ENCODE measurements at regions of chr14 and their contacts with region 1.

Region 1: GRCh38 chr14:94136575-94137331 is 7.3 kb upstream of the IFI27L2 start:
- DNase-seq: peak; percentile 59 to 84 (median 73)
- ATAC-seq: peak; percentile 96
- H3K4me3 ChIP-seq: no peak overlapping the region
- H3K4me3 Mint-ChIP-seq: no peak overlapping the region
- H3K27ac ChIP-seq: no peak overlapping the region
- H3K27ac Mint-ChIP-seq: no peak overlapping the region
- H3K4me1 ChIP-seq: no peaks in the 10 kb centered on the region
- H3K4me1 Mint-ChIP-seq: peaks cover 0 to 12% (median 0%) of the 10 kb centered on the region in 7 donors
- H3K27me3 ChIP-seq: no peaks in the 10 kb centered on the region
- H3K27me3 Mint-ChIP-seq: peaks cover 0 to 34% (median 4%) of the 10 kb centered on the region in 5 donors

Region 2: DNA sequence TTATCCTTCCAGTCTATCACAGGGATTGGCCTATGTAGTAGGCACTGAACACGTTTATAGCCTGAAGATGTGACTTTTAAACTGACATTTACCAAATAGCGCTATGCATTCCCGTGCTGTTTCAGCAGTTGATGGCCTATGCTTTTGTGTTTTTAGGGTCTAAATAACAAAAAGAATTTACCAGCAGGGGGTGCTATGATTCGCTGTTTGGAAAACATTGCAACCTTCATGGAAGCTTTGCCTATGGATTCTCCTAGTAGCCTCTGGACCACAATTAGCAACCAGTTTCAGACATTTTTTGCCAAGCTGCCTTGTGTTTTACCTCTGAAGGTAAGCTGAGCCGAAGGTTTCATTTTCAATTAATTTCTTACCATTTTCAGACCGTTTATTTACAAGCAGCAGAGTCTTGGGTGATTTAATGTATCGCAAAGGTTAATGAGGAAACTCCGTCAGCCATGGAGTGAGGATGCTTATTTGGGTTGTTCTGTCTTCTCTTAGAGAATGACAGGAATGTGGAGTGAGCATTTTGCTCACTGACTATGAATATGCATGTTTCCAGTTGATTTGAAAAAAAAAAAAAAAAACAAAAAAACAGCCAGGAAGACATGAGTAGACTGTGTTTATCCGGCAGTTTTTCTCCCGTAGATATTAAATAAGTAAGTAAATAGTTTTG is 481.5 kb before region 1 on chr14:
- CTCF ChIA-PET with region 1: no interaction called
- POLR2A ChIA-PET with region 1: no interaction called
- intact Hi-C with region 1: loop called (anchors 1 to 2 kb)
- DNase-seq: peak in 1 of 9 donors; percentile 2
- ATAC-seq: no peak
- H3K4me3 ChIP-seq: no peak overlapping the region
- H3K4me3 Mint-ChIP-seq: no peak overlapping the region
- H3K27ac ChIP-seq: no peak overlapping the region
- H3K27ac Mint-ChIP-seq: no peak overlapping the region
- H3K4me1 ChIP-seq: no peaks in the 10 kb centered on the region
- H3K4me1 Mint-ChIP-seq: no peaks in the 10 kb centered on the region
- H3K27me3 ChIP-seq: peaks cover 4 to 6% of the 10 kb centered on the region in 2 donors
- H3K27me3 Mint-ChIP-seq: peaks cover 10 to 62% (median 36%) of the 10 kb centered on the region in 5 donors

Region 3: DNA sequence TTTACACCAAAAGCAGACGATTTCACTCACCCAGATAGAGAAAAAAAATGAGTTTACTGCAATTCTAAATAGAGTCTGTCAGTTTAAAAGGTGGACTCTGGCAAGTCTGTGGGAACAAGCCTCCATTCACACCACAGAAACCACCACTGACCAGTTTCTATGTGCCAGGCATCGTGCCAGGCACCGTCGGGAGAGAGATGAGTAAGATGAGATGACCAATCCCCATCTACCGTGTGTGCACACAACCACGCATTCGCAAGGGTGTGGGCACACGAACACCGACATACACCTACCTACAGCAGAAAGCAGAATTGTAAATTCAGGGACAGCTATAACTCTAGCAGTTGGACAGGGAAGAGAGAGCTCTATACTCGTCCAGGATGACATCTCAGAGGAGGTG is 406.8 kb before region 1 on chr14:
- CTCF ChIA-PET with region 1: no interaction called
- POLR2A ChIA-PET with region 1: no interaction called
- intact Hi-C with region 1: no loop called
- DNase-seq: no peak
- ATAC-seq: no peak
- H3K4me3 ChIP-seq: no peak overlapping the region
- H3K4me3 Mint-ChIP-seq: no peak overlapping the region
- H3K27ac ChIP-seq: no peak overlapping the region
- H3K27ac Mint-ChIP-seq: no peak overlapping the region
- H3K4me1 ChIP-seq: no peaks in the 10 kb centered on the region
- H3K4me1 Mint-ChIP-seq: no peaks in the 10 kb centered on the region
- H3K27me3 ChIP-seq: no peaks in the 10 kb centered on the region
- H3K27me3 Mint-ChIP-seq: peaks cover 0 to 8% (median 0%) of the 10 kb centered on the region in 5 donors

Region 4: DNA sequence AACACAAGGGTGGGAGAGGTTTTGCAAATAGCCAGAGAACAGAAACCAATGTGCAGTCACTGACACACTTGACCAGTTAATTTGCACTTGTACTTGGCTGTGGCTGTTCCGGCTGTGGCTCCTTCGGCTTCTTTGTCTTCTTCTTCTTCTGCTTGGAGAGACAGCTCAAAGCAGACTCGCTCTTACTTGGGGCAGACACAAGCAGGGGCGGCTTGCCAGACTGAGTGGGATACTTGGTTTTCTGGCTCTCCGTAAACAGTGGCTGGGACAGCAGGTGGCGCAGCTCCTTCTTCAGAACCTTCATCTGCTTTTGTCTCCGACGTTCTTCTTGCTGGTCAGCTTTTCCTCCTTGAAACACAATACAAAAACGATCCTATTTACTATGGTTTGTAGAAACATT is 85.6 kb before region 1 on chr14:
- CTCF ChIA-PET with region 1: interaction called, 7 read pairs
- POLR2A ChIA-PET with region 1: interaction called, 3 read pairs
- intact Hi-C with region 1: loop called in 1 of 2 experiments (anchors 5 kb)
- DNase-seq: no peak
- ATAC-seq: no peak
- H3K4me3 ChIP-seq: no peak overlapping the region
- H3K4me3 Mint-ChIP-seq: peak overlapping the region in 1 of 10 donors; percentile 22
- H3K27ac ChIP-seq: no peak overlapping the region
- H3K27ac Mint-ChIP-seq: peak overlapping the region in 5 of 9 donors; percentile 32 to 70 (median 52)
- H3K4me1 ChIP-seq: peaks cover 0 to under 1% of the 10 kb centered on the region in 2 donors
- H3K4me1 Mint-ChIP-seq: peaks cover 6 to 45% (median 17%) of the 10 kb centered on the region in 7 donors
- H3K27me3 ChIP-seq: no peaks in the 10 kb centered on the region
- H3K27me3 Mint-ChIP-seq: no peaks in the 10 kb centered on the region

Region 5: DNA sequence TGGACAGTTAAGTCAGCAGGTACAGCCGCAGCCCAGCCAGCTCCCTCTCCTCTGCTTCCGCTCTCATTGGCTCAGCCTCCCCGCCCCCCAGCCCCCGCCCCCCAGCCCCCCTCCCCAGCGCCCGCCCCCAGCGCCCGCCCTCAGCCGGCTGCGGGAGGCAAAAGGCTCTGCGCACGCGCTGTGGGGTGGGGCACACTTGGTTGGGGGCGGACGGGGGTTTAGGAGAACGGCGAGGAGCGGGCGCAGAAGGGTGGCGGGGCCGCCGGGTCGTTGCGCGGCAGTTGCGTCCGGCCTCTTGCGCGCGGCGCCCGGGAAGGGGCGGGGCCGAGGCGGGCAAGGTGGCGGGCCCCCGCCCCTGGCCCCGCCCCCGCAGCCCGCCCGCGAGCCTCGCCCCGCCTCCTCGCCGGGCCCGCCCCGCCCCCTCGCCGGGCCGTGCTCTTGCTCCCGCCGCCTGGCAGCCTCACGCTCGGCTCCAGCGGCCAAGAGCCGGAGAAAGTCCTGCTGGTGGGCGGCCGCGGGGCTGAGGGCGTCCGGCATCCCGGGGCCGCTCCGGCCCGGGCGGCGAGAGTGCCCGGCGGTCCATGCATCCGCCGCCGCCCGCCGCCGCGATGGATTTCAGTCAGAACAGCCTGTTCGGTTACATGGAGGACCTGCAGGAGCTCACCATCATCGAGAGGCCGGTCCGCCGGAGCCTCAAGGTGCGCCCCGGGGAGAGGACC is 37.3 kb after region 1 on chr14 and contains the start of gene PPP4R4:
- CTCF ChIA-PET with region 1: interaction called, 90 read pairs
- POLR2A ChIA-PET with region 1: interaction called, 13 read pairs
- intact Hi-C with region 1: loop called in 1 of 2 experiments (anchors 1 kb)
- DNase-seq: peak; percentile 87 to 92 (median 88)
- ATAC-seq: peak; percentile 96
- H3K4me3 ChIP-seq: peak within 1 kb of the TSS; percentile 77
- H3K4me3 Mint-ChIP-seq: peak within 1 kb of the TSS; percentile 80 to 94 (median 88)
- H3K27ac ChIP-seq: peak within 1 kb of the TSS; percentile 53
- H3K27ac Mint-ChIP-seq: peak within 1 kb of the TSS; percentile 11 to 86 (median 75)
- H3K4me1 ChIP-seq: peaks cover 0 to 16% of the 10 kb centered on the region in 2 donors
- H3K4me1 Mint-ChIP-seq: peaks cover 15 to 29% (median 22%) of the 10 kb centered on the region in 7 donors
- H3K27me3 ChIP-seq: no peaks in the 10 kb centered on the region
- H3K27me3 Mint-ChIP-seq: peaks cover 0 to 59% (median 5%) of the 10 kb centered on the region in 5 donors
- total RNA-seq, gene PPP4R4: 0.44 to 2.4 (median 1.7) TPM

Region 6: DNA sequence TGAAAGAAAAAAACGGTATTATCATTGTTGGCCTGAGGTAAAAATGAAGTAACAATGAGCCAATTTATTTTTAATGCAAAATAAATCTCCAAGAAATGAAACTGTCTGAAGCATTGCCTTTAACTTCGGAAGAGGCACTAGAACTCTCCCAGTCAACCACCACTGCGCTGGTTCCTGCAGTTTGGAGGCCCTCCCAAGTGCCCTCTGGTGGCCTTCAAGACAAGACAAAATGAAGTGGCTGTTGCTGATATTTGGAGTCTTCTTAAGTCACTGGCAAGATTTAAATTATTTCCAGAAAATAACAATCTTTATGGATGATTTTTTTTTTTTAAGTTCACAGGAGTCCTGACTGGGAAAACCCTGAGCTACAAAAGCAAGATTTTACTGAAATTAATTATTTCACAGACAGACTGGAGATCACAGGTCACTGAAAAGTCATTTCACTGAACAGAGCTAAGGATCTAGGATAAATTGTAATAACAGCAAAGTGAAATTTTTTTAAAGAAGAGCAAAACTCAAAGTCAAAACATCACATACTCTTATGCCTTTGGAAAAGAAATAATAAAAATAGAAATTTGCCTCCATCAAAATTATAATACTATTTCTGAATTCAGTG is 962.3 kb after region 1 on chr14:
- CTCF ChIA-PET with region 1: no interaction called
- POLR2A ChIA-PET with region 1: no interaction called
- intact Hi-C with region 1: loop called in 1 of 2 experiments (anchors 10 kb)
- DNase-seq: peak in 6 of 9 donors; percentile 14 to 36 (median 27)
- ATAC-seq: peak; percentile 64
- H3K4me3 ChIP-seq: no peak overlapping the region
- H3K4me3 Mint-ChIP-seq: no peak overlapping the region
- H3K27ac ChIP-seq: no peak overlapping the region
- H3K27ac Mint-ChIP-seq: peak overlapping the region in 3 of 9 donors; percentile 4 to 52 (median 51)
- H3K4me1 ChIP-seq: no peaks in the 10 kb centered on the region
- H3K4me1 Mint-ChIP-seq: peaks cover 10 to 41% (median 33%) of the 10 kb centered on the region in 7 donors
- H3K27me3 ChIP-seq: no peaks in the 10 kb centered on the region
- H3K27me3 Mint-ChIP-seq: no peaks in the 10 kb centered on the region

Region 7: DNA sequence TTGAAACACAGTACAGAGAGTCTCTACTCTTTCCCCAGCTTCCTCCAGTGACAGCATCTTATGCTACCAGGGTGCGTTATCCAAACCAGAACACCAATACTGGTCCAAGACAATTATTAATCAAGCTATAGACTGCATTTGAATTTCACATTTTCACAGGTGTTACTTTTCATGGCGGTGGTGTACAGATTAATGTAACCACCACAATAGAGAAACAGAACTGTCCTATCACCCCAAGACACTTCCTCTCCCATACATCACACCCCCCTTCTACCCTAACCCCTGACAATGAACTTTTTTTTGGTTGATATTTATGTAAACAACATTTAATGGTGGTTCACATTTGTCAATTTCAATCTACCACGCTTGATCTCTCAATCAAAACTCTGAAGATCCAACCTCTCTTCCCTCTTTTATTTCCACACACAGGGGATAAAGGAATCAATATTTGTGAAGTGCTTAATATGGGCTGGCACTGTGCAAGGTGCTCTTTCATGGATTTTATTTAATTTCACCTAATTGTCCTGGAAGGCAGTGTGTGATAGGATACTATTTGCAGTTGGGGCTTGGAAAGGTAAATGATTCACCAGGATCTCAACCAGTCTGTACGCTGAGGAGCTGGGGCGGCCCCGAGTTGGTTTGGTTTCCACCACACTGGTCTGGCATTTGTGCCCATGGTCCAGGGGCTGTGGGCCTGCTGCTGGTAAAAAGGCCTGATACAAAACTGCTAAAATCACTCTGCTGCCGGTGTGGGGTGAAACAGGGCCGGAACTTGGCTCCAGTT is 1075.2 kb after region 1 on chr14:
- CTCF ChIA-PET with region 1: no interaction called
- POLR2A ChIA-PET with region 1: no interaction called
- intact Hi-C with region 1: no loop called
- DNase-seq: no peak
- ATAC-seq: no peak
- H3K4me3 ChIP-seq: no peak overlapping the region
- H3K4me3 Mint-ChIP-seq: no peak overlapping the region
- H3K27ac ChIP-seq: no peak overlapping the region
- H3K27ac Mint-ChIP-seq: no peak overlapping the region
- H3K4me1 ChIP-seq: no peaks in the 10 kb centered on the region
- H3K4me1 Mint-ChIP-seq: peaks cover 0 to 4% (median 0%) of the 10 kb centered on the region in 7 donors
- H3K27me3 ChIP-seq: no peaks in the 10 kb centered on the region
- H3K27me3 Mint-ChIP-seq: peaks cover 0 to 7% (median 0%) of the 10 kb centered on the region in 5 donors

Measured in naive thymus-derived CD4-positive, alpha-beta T cell (primary cell).